Activated CD4-positive, alpha-beta memory T cell treated with anti-CD3 and anti-CD28 coated beads for 36 hours (primary cell): ENCODE measurements at regions of chr7 and their contacts with region 1.

Region 1: GRCh38 chr7:134126966-134127848 is at the start of gene LRGUK:
- DNase-seq: peak; percentile 84
- H3K4me3 Mint-ChIP-seq: peak within 1 kb of the TSS; percentile 81
- H3K27ac Mint-ChIP-seq: no peak within 1 kb of the TSS
- H3K4me1 Mint-ChIP-seq: peaks cover 15% of the 10 kb centered on the region
- H3K27me3 Mint-ChIP-seq: peaks cover 13% of the 10 kb centered on the region
- total RNA-seq, gene LRGUK: 0.07 TPM

Region 2: DNA sequence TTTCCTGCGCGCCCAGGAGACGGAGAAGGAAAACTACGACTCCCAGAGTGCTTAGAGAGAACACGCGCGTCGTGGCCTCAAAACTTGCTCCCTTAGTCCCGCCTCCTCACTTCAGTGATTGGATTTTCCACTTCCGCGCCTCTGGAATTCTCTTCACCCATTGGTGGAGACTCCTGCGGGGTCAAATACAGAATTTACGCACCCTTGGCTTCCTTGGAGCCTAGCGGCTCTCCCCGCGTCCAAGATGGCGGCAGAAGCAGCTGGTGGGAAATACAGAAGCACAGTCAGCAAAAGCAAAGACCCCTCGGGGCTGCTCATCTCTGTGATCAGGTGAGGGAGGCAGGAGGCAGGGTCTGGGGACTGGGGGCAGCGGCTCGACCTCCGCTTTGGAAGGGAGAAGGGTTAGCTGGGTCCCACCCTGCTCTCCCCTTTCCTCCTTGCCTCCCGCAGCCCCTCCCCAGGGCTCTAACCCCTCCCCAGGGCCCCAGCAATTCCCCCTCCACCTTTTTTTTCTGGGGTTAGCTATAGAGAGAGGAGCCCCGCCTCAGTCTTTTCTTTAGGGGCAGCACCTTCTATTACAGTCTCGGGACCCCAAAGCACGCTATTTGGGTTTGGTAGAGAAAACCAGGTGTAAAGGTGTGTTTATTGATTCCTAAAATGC is 874.2 kb before region 1 on chr7 and contains the start of gene EXOC4:
- CTCF ChIA-PET with region 1: no interaction called
- POLR2A ChIA-PET with region 1: no interaction called
- intact Hi-C with region 1: loop called (anchors 5 kb)
- DNase-seq: peak; percentile 95
- H3K4me3 Mint-ChIP-seq: peak within 1 kb of the TSS; percentile 89
- H3K27ac Mint-ChIP-seq: peak within 1 kb of the TSS; percentile 85
- H3K4me1 Mint-ChIP-seq: peaks cover 30% of the 10 kb centered on the region
- H3K27me3 Mint-ChIP-seq: no peaks in the 10 kb centered on the region
- total RNA-seq, gene EXOC4: 55.8 to 60.8 TPM

Region 3: DNA sequence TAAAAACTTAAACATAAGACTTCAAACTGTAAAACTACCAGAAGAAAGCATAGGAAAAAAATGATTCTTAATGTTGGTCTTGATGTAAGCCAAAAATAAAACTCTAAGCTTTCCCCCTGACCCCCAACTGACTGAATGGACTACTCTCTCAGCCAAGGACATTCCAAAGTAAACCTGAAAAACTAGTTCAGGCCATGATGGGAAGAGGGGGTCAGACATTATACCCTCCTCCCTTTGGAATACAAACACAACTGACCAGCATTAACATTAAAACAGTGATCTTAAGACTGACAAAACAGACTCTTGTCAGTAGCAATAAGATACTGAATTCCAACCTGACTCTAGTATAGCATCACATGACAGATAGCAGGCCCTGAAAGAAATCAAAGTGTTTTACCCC is 13.6 kb before region 1 on chr7:
- CTCF ChIA-PET with region 1: no interaction called
- POLR2A ChIA-PET with region 1: no interaction called
- intact Hi-C with region 1: no loop called
- DNase-seq: no peak
- H3K4me3 Mint-ChIP-seq: no peak overlapping the region
- H3K27ac Mint-ChIP-seq: no peak overlapping the region
- H3K4me1 Mint-ChIP-seq: no peaks in the 10 kb centered on the region
- H3K27me3 Mint-ChIP-seq: no peaks in the 10 kb centered on the region

Region 4: GRCh38 chr7:134140889-134141867 is 14.0 kb after region 1 on chr7:
- CTCF ChIA-PET with region 1: interaction called, 28 read pairs
- POLR2A ChIA-PET with region 1: no interaction called
- intact Hi-C with region 1: no loop called
- DNase-seq: peak; percentile 69
- H3K4me3 Mint-ChIP-seq: no peak overlapping the region
- H3K27ac Mint-ChIP-seq: no peak overlapping the region
- H3K4me1 Mint-ChIP-seq: no peaks in the 10 kb centered on the region
- H3K27me3 Mint-ChIP-seq: no peaks in the 10 kb centered on the region

Region 5: DNA sequence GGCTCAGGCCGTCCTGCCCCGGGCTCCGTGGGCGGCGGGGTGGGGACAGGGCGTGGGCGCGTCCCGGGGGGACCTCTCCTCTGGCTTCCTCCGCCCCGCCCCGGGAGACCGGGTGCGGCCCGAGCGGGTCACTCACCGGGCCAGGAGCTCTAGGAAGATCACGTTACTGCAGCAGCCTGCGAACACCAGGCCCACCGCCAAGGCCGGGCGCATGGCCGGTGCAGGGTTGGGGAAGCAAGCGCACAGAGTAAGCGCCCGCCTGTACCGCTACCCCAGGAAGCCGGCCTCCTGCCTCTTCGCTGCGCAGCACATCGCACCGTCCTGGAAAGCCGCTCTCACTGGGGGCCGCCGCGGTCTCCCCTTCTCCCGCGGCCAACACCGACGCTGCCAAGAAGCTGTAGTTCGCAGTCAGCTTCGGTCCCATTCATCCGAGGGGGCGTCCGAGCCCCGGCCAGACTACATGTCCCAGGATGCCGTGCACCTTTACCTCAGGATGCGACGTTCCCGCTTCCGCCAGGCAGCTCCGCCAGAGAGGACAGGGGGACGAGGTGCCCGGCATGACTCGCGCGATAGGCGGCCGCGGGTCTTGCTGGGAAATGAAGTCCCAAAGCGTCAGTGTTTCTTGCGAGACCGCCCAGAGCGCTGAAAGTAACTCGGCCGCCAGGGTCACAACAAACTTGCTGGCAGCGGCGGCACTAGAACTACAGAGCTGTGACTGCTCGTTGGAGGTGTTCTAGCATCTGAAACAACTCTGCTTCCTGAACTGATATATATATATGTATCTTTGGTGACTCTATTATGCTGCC is 189.5 kb after region 1 on chr7 and contains the start of gene SLC35B4:
- CTCF ChIA-PET with region 1: interaction called, 3 read pairs
- POLR2A ChIA-PET with region 1: no interaction called
- intact Hi-C with region 1: loop called (anchors 1 kb)
- DNase-seq: peak; percentile 97
- H3K4me3 Mint-ChIP-seq: peak within 1 kb of the TSS; percentile 90
- H3K27ac Mint-ChIP-seq: peak within 1 kb of the TSS; percentile 72
- H3K4me1 Mint-ChIP-seq: peaks cover 19% of the 10 kb centered on the region
- H3K27me3 Mint-ChIP-seq: no peaks in the 10 kb centered on the region
- total RNA-seq, gene SLC35B4: 10.9 to 14.5 TPM